Activated T-helper 2 cell treated with anti-CD3 and anti-CD28 coated beads, Interferon-gamma antibody, Interleukin-2, Interleukin-4, amounts not matched to agents 10 μg/mL and 5 μg/mL and 100 μg/mL, durations not matched to agents 14 hours and 24 hours and 36 hours (primary cell): ENCODE measurements at regions of chr17 and their contacts with region 1.

Region 1: DNA sequence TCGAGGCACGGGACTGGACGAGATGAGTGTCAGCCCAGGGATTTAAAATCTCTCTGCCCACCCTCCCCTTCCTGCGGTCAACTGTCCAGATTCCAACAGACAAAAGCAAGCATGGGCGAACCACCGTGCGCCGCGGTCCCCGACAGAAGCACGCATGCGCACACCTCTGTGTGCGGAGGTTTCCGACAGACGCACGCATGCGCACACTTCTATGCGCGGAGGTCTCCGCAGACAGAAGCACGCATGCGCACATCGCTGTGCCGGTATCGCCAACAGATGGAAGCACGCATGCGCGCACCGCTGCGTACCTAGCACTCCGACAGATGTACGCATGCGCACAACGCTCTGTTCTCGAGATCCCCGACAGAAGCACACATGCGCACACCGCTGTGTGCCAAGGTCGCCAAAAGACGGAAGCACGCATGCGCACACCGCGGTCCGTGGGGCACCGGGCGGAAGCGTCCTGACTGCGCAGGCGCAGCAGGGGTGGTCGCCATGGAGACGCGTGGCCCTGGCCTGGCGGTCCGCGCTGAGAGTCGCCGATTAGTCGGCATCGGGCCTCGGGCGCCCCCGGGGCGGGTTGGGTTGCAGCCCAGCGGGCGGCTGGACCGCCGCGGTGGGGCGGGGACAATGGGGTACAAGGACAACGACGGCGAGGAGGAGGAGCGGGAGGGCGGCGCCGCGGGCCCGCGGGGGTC is 57.4 kb upstream of the RPH3AL start:
- DNase-seq: peak; percentile 99
- H3K4me3 Mint-ChIP-seq: peak overlapping the region; percentile 96
- H3K27ac Mint-ChIP-seq: peak overlapping the region; percentile 86
- H3K4me1 Mint-ChIP-seq: peaks cover 46% of the 10 kb centered on the region
- H3K27me3 Mint-ChIP-seq: no peaks in the 10 kb centered on the region

Region 2: GRCh38 chr17:143782-144281 is 266.2 kb before region 1 on chr17:
- intact Hi-C with region 1: loop called (anchors 5 kb)
- DNase-seq: peak; percentile 78
- H3K4me3 Mint-ChIP-seq: no peak overlapping the region
- H3K27ac Mint-ChIP-seq: no peak overlapping the region
- H3K4me1 Mint-ChIP-seq: no peaks in the 10 kb centered on the region
- H3K27me3 Mint-ChIP-seq: peaks cover 7% of the 10 kb centered on the region

Region 3: DNA sequence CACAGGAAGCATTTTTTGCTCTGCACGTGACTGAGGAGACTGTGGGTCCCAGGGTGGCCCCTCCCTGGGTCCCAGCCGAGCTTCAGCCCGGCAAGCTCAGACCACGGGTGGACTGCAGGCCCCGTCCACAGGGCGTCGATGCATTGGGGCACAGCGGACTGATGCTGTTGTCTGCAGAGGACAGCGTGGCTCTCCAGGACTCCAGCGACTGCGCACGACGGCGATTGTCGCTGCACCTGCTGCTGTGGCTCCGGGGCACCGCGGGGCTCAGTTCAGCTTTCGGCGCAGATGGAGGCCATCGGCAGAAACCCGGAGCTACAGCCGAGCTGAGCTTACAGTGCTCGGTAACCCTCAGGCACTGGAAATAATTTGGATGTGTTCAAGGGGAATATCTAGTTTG is 31.2 kb after region 1 on chr17:
- intact Hi-C with region 1: no loop called
- DNase-seq: no peak
- H3K4me3 Mint-ChIP-seq: no peak overlapping the region
- H3K27ac Mint-ChIP-seq: no peak overlapping the region
- H3K4me1 Mint-ChIP-seq: peaks cover 4% of the 10 kb centered on the region
- H3K27me3 Mint-ChIP-seq: no peaks in the 10 kb centered on the region

Region 4: DNA sequence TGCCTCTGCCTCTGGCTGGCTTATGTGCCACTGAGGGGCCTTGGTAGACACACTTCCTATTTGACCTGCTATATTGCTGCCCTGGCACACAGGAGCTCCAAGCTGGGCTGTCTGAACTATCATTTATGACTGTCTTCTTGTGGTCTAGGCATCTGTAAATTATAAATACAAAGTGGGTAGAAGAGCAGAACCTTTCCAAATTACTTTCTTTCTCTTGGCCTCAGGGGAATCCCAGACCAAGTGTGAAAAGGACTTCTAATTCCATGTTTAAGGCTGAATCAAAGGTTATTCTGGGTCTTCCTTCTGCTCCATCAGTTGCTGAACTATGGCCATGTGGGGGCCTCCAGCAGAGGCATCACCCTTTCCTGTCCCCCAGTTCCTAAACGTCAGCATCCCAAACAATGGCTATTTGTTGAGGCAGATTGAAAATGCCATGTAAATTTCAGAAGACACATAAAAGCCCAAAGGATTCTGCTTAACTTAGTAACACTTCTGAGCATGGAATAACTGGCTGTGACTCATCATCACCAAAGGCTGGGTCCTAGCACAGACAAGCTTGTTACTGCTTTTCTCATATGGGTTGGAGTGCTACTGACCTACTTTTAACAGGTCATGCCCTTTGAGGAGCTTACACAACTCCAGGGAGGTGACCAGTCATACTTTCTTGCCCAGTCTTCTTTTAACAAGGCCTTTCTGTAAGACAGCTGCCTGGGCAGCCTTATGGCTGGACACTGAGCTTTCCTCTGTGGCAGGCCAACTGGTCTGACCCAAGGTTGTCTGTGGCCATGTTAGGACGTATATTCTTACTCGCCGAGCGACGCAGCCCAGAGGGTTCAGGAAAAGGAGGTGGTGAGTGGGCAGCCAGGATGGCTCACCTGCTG is 149.8 kb after region 1 on chr17:
- intact Hi-C with region 1: loop called (anchors 5 kb)
- DNase-seq: no peak
- H3K4me3 Mint-ChIP-seq: no peak overlapping the region
- H3K27ac Mint-ChIP-seq: peak overlapping the region; percentile 67
- H3K4me1 Mint-ChIP-seq: peaks cover 21% of the 10 kb centered on the region
- H3K27me3 Mint-ChIP-seq: no peaks in the 10 kb centered on the region

Region 5: DNA sequence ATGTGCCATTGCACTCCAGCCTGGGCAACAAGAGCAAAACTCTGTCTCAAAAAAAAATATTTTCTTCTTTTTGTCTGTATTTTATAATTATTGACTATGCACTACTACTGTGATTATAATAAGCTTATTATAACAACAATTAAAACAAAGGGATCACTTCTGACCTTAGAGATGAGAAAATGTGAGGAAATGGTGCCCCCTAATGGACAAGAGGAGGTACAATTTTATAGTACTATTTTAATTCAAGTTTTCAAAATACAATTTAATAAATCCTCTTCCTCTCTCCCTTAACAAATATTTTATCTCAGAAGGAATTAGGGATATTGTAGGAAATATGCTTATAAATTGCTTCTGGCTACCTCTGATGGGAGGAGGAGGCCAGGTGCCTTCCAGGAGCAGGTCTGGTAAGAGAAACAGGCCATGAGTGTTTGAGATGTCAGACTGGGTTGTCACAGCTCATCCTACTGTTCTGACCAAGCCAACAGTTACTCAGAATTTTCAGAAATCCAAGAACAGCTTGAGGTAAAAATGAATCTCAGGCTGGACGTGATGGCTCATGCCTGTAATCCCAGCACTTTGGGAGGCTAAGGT is 290.6 kb after region 1 on chr17:
- intact Hi-C with region 1: loop called (anchors 1 kb)
- DNase-seq: no peak
- H3K4me3 Mint-ChIP-seq: no peak overlapping the region
- H3K27ac Mint-ChIP-seq: peak overlapping the region; percentile 49
- H3K4me1 Mint-ChIP-seq: peaks cover 2% of the 10 kb centered on the region
- H3K27me3 Mint-ChIP-seq: no peaks in the 10 kb centered on the region

Region 6: DNA sequence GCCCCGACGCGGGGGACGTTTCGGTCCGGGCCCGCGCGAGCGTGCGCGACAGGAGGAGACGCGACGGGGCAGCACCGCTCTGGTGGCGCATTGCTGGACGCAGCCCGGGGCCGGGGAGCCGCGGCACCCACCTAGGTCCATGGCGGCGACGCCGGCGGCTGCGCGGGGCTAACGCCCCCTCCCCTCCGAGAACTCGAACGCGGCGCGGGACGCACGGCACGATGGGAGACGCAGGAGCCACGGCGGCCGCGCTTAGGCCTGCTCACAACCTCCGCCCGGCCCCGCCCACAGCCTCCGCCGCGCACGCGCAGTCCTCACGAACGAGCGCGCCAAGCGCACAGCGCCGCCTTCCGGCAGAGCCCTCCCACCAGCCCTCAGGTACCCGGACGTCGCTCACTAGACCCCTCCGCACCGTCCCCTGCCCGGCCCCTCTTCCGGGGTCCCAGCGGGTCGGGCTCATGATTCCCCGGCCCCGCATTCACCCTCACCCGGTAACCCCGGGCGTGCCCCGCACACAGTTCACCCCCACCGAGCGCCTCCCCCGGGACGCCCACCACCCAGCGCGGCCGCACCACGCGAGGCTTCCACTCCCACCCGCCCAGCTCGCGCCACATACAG is 342.1 kb after region 1 on chr17 and contains the start of gene GEMIN4:
- intact Hi-C with region 1: loop called (anchors 5 kb)
- DNase-seq: peak; percentile 97
- H3K4me3 Mint-ChIP-seq: peak within 1 kb of the TSS; percentile 98
- H3K27ac Mint-ChIP-seq: peak within 1 kb of the TSS; percentile 95
- H3K4me1 Mint-ChIP-seq: peaks cover 26% of the 10 kb centered on the region
- H3K27me3 Mint-ChIP-seq: no peaks in the 10 kb centered on the region
- total RNA-seq, gene GEMIN4: 62.8 and 64.2 TPM in 2 replicates

Region 7: DNA sequence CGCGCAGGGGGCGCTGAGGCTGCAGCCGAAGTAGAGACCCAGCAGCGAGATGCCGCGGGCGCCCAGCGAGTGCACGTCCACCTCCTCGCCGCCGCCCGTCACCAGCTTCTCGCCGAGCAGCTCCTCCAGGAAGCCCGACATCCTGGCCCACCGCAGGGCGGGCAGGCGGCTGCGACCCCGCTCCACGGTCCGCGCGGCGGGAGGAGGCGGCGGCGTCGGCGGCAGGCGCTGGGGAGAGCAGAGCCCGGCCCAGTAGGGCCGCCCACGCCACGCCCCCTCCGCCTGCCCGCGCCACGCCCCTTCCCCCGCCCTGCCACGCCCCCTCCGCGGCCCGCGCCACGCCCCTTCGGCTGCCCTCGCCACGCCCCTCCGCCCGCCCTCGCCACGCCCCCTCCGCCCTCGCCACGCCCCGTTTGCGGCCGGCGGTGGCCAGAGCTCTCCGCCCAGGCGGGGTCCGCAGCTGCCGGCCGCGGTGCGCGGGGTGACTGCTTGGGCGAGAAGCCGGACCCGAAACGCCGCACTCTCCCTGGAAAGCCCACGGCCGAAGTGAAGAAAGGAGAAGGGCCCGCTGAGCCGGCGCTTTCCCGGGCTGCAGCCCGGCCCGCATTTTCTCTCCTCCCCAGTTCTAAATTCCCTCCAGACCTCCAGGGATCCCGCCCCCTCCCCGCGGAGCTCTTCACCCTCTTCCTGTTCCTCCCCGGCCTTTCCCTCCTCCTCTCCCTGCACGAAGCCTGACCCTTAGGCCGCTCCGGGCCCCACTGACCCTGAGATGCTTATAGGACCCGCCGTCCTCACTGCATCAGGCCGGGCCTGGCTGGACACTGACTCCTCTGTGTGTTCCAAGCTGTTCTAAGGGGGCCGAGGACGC is 569.8 kb after region 1 on chr17 and contains the start of gene NXN:
- intact Hi-C with region 1: loop called (anchors 5 kb)
- DNase-seq: peak; percentile 79
- H3K4me3 Mint-ChIP-seq: peak within 1 kb of the TSS; percentile 78
- H3K27ac Mint-ChIP-seq: no peak within 1 kb of the TSS
- H3K4me1 Mint-ChIP-seq: peaks cover 11% of the 10 kb centered on the region
- H3K27me3 Mint-ChIP-seq: peaks cover 32% of the 10 kb centered on the region
- total RNA-seq, gene NXN: 0.43 and 0.48 TPM in 2 replicates